Activated CD4-positive, alpha-beta T cell treated with anti-CD3 and anti-CD28 coated beads for 36 hours (primary cell): ENCODE measurements at regions of chr7 and their contacts with region 1.

Region 1: GRCh38 chr7:106772655-106773108 is 92.4 kb upstream of the PIK3CG start:
- DNase-seq: no peak
- ATAC-seq: peak; percentile 79
- H3K4me3 Mint-ChIP-seq: peak overlapping the region; percentile 27
- H3K27ac Mint-ChIP-seq: peak overlapping the region; percentile 91
- H3K4me1 Mint-ChIP-seq: peaks cover 66% of the 10 kb centered on the region
- H3K27me3 Mint-ChIP-seq: no peaks in the 10 kb centered on the region

Region 2: DNA sequence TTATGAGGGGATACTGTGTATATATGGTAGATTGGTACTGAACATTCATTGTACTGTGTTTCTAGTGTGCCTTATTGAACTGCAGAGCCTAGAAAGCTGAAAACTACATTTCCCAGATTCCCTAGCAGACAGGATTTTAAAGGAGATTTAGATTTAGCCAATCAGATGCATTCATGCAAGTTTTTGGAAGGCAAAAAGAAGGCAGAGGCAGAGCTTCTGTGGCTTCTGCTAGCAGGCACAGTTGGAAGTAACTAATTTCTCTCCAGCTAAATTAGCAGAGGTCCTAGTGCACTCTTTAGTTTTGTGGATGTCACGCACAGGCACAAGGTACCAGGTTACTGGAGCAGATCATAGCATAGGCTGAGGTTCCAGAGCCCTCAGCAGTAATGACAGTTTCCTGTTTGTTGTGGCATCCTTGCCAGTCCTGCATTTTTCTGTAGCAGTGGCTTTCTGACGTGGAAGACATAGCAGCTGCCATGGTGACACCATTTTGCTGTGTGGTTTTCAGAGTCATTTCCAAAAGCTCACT is 28.1 kb before region 1 on chr7:
- CTCF ChIA-PET with region 1: no interaction called
- POLR2A ChIA-PET with region 1: no interaction called
- intact Hi-C with region 1: loop called in 1 of 2 experiments (anchors 2 kb)
- DNase-seq: peak; percentile 32
- ATAC-seq: peak; percentile 81
- H3K4me3 Mint-ChIP-seq: no peak overlapping the region
- H3K27ac Mint-ChIP-seq: no peak overlapping the region
- H3K4me1 Mint-ChIP-seq: peaks cover 11% of the 10 kb centered on the region
- H3K27me3 Mint-ChIP-seq: peaks cover 6% of the 10 kb centered on the region